ENCODE measurements at regions of chr2 and their contacts with region 1.

Region 1: GRCh38 chr2:197168705-197169104 is 141.9 kb downstream of the ANKRD44 start:
- DNase-seq: peak; percentile 90
- H3K4me3 Mint-ChIP-seq: no peak overlapping the region
- H3K27ac Mint-ChIP-seq: peak overlapping the region; percentile 73
- H3K4me1 Mint-ChIP-seq: peaks cover 60% of the 10 kb centered on the region
- H3K27me3 Mint-ChIP-seq: no peaks in the 10 kb centered on the region

Region 2: GRCh38 chr2:197011799-197012641 is 156.7 kb before region 1 on chr2:
- CTCF ChIA-PET with region 1: interaction called, 3 read pairs
- intact Hi-C with region 1: loop called (anchors 1 kb)
- DNase-seq: peak; percentile 42
- H3K4me3 Mint-ChIP-seq: no peak overlapping the region
- H3K27ac Mint-ChIP-seq: peak overlapping the region; percentile 81
- H3K4me1 Mint-ChIP-seq: peaks cover 2% of the 10 kb centered on the region
- H3K27me3 Mint-ChIP-seq: no peaks in the 10 kb centered on the region

Region 3: GRCh38 chr2:197130318-197130717 is 38.4 kb before region 1 on chr2:
- CTCF ChIA-PET with region 1: interaction called, 25 read pairs
- intact Hi-C with region 1: loop called (anchors 5 kb)
- DNase-seq: no peak
- H3K4me3 Mint-ChIP-seq: no peak overlapping the region
- H3K27ac Mint-ChIP-seq: peak overlapping the region; percentile 76
- H3K4me1 Mint-ChIP-seq: peaks cover 73% of the 10 kb centered on the region
- H3K27me3 Mint-ChIP-seq: no peaks in the 10 kb centered on the region

Region 4: DNA sequence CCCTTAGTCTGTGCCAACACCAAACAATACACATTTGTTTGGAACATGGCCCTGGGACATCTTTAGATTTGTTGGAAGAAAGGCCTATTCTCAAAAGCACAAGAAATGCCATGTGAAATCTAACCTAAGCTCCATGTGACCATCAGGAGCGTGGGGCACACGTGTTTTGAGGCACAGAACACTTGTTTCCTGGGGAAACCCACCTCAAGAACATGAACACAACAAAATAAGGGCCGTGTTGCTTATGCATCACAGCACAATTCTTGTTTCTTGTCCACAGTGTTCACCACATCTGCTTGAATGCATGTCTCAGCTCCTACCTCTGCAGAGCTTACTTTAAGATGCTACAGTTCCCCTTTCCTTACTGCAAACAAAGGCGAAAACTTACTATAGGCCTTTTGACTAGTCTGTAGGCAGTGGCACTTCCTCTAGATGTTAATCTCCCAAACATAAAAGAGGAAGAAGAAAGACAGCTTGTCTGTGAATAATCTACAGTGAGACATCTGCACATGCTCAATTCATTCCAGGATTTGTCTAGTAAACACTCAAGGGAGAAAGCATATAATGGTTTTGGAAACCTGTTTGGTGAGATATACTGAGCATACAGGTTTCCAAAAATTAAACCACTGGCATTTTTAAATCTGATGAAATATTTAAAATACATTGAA is 23.1 kb before region 1 on chr2:
- CTCF ChIA-PET with region 1: interaction called, 13 read pairs
- intact Hi-C with region 1: no loop called
- DNase-seq: peak; percentile 16
- H3K4me3 Mint-ChIP-seq: no peak overlapping the region
- H3K27ac Mint-ChIP-seq: peak overlapping the region; percentile 85
- H3K4me1 Mint-ChIP-seq: peaks cover 70% of the 10 kb centered on the region
- H3K27me3 Mint-ChIP-seq: no peaks in the 10 kb centered on the region

Region 5: GRCh38 chr2:197179744-197180498 is 11.2 kb after region 1 on chr2:
- CTCF ChIA-PET with region 1: interaction called, 56 read pairs
- intact Hi-C with region 1: no loop called
- DNase-seq: no peak
- H3K4me3 Mint-ChIP-seq: no peak overlapping the region
- H3K27ac Mint-ChIP-seq: no peak overlapping the region
- H3K4me1 Mint-ChIP-seq: peaks cover 61% of the 10 kb centered on the region
- H3K27me3 Mint-ChIP-seq: no peaks in the 10 kb centered on the region

Measured in activated naive CD4-positive, alpha-beta T cell treated with anti-CD3 and anti-CD28 coated beads for 36 hours (primary cell).